ENCODE measurements at regions of chr14 and their contacts with region 1.

Region 1: GRCh38 chr14:78022059-78022458 is 148.1 kb upstream of the NRXN3 start:
- DNase-seq: peak; percentile 61
- H3K4me3 ChIP-seq: no peak overlapping the region
- H3K27ac ChIP-seq: no peak overlapping the region
- H3K4me1 ChIP-seq: no peaks in the 10 kb centered on the region
- CTCF ChIP-seq: peak; percentile 85

Region 2: GRCh38 chr14:78363008-78363407 is 340.9 kb after region 1 on chr14:
- CTCF ChIA-PET with region 1: no interaction called
- POLR2A ChIA-PET with region 1: no interaction called
- intact Hi-C with region 1: loop called (anchors 10 kb)
- DNase-seq: no peak
- H3K4me3 ChIP-seq: no peak overlapping the region
- H3K27ac ChIP-seq: no peak overlapping the region
- H3K4me1 ChIP-seq: no peaks in the 10 kb centered on the region
- CTCF ChIP-seq: no peak

Measured in OCI-LY7 (cell line).